Activated naive CD4-positive, alpha-beta T cell treated with anti-CD3 and anti-CD28 coated beads for 36 hours (primary cell): ENCODE measurements at regions of chr1 and their contacts with region 1.

Region 1: GRCh38 chr1:204446370-204447111 is 34.9 kb upstream of the PPP1R15B start:
- DNase-seq: peak; percentile 88
- H3K4me3 Mint-ChIP-seq: no peak overlapping the region
- H3K27ac Mint-ChIP-seq: peak overlapping the region; percentile 77
- H3K4me1 Mint-ChIP-seq: peaks cover 54% of the 10 kb centered on the region
- H3K27me3 Mint-ChIP-seq: no peaks in the 10 kb centered on the region

Region 2: DNA sequence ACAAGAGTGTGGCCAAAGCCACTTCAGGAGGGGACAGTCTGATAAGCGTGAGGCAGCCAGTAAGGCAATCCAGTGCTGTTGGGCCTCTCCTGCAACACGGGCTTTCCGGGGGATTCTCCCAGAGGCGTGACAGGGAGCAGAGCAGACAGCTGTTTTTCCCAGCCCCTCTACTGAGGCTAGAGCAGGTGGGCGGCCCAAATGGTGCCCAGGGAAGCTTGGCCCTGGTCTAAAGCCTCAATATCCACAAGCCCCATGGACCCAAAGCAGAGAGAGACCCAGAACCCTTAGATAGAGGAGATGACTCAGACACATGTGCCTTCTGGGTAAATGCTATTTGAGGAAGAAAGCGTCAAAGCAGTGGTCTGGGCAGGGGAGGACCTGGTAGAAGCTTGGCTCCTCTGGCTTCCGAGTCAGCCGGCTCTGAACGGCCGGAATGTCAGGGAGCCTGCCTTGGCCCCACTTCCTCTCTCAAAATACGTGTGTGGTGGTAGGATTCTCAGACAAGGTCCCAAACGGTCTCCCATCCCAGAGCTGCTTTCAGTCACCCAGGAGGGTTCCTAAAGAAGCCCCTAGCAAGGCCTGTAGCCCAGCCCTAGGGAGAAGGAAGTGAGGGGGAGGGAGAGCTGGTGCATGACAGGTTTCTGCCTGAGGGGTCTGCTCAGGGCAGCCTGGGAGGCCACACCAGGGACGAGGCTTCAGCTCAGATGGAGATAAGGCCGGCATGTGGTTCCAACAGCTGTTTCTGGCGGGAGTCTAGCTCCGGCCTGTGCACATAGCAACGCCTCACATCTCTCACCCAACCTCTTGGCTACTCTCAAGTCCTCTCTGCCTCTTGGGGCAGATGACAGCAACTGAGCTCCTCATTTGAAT is 19.2 kb after region 1 on chr1:
- CTCF ChIA-PET with region 1: interaction called, 52 read pairs
- intact Hi-C with region 1: loop called (anchors 2 kb)
- DNase-seq: no peak
- H3K4me3 Mint-ChIP-seq: no peak overlapping the region
- H3K27ac Mint-ChIP-seq: peak overlapping the region; percentile 76
- H3K4me1 Mint-ChIP-seq: peaks cover 58% of the 10 kb centered on the region
- H3K27me3 Mint-ChIP-seq: no peaks in the 10 kb centered on the region

Region 3: DNA sequence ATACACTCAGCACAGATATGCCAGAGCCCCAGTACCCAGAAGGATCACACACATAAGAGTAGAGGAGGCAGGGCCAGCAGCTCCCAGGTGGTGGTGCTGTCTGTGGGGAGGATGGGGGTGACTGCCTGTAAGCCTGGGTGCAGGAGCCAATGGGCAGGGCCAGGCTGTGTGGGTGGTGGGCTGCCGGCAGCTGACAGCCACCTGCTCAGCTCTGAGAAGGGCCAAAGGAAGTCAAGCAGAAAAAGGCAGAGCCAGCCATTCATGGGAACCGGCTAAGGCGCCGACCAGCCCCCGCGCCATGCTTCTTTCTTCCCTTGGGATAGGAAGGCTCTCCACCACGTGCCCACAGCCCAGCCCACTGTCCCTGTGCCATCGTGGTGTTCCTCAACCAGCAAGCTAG is 34.0 kb after region 1 on chr1:
- CTCF ChIA-PET with region 1: interaction called, 38 read pairs
- intact Hi-C with region 1: no loop called
- DNase-seq: peak; percentile 21
- H3K4me3 Mint-ChIP-seq: no peak overlapping the region
- H3K27ac Mint-ChIP-seq: no peak overlapping the region
- H3K4me1 Mint-ChIP-seq: peaks cover 63% of the 10 kb centered on the region
- H3K27me3 Mint-ChIP-seq: no peaks in the 10 kb centered on the region